ENCODE measurements at regions of chr17 and their contacts with region 1.

Region 1: DNA sequence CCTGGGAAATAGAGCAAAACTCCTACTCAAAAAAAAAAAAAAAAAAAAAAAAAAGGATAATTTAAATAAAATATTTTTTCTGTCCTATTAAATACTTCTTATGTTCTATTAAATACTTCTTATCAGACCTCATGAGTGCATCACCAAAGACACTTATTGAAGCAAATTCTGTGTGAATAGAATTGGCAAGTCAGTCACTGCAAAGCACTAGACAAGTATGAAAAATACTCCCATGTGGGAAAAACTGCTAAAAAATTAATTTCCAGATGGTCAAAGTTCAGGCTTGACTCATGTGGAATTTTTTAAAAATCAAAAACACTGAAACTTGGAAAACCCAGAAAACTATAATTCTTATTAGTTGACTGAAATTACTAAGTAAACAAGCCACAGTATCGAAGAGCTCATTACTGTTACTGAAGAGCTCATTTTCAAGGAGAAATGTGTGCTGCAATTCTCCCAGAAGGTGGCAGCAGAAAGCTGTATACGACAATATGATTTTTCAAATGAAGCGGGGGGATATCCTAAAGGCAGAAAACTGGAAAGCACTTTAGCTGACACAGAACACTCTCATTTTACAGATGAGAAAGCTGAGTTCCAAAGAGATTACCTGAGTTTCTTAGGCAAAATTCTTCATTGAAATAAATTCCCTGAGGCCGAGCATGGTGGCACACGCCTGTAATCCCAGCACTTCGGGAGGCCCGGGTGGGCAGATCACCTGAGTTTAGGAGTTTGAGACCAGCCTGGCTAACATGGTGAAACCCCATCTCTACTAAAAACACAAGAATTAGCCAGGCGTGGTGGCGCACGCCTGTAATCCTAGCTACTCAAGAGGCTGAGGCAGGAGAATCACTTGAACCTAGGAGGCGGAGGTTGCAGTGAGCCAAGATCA is 15.9 kb upstream of the FBXO47 start:
- DNase-seq: no peak
- H3K4me3 ChIP-seq: no peak overlapping the region
- H3K27ac ChIP-seq: peak overlapping the region in 1 of 4 donors; percentile 38
- H3K4me1 ChIP-seq: peaks cover 3 to 11% (median 4%) of the 10 kb centered on the region in 4 donors
- H3K27me3 ChIP-seq: no peaks in the 10 kb centered on the region
- CTCF ChIP-seq: peak; percentile 77 to 85 (median 84)
- EP300 ChIP-seq: no peak
- POLR2A ChIP-seq: no peak

Region 2: GRCh38 chr17:39069114-39069756 is 86.1 kb after region 1 on chr17:
- intact Hi-C with region 1: loop called (anchors 5 kb)
- DNase-seq: no peak
- H3K4me3 ChIP-seq: no peak overlapping the region
- H3K27ac ChIP-seq: no peak overlapping the region
- H3K4me1 ChIP-seq: peaks cover 0 to 12% (median 4%) of the 10 kb centered on the region in 4 donors
- H3K27me3 ChIP-seq: no peaks in the 10 kb centered on the region
- CTCF ChIP-seq: peak; percentile 50 to 66 (median 62)
- EP300 ChIP-seq: no peak
- POLR2A ChIP-seq: no peak

Region 3: GRCh38 chr17:39099663-39100286 is 116.7 kb after region 1 on chr17:
- intact Hi-C with region 1: no loop called
- DNase-seq: peak; percentile 94
- H3K4me3 ChIP-seq: no peak overlapping the region
- H3K27ac ChIP-seq: peak overlapping the region; percentile 21 to 68 (median 50)
- H3K4me1 ChIP-seq: peaks cover 23 to 53% (median 42%) of the 10 kb centered on the region in 4 donors
- H3K27me3 ChIP-seq: no peaks in the 10 kb centered on the region
- CTCF ChIP-seq: no peak
- EP300 ChIP-seq: no peak
- POLR2A ChIP-seq: no peak

Region 4: DNA sequence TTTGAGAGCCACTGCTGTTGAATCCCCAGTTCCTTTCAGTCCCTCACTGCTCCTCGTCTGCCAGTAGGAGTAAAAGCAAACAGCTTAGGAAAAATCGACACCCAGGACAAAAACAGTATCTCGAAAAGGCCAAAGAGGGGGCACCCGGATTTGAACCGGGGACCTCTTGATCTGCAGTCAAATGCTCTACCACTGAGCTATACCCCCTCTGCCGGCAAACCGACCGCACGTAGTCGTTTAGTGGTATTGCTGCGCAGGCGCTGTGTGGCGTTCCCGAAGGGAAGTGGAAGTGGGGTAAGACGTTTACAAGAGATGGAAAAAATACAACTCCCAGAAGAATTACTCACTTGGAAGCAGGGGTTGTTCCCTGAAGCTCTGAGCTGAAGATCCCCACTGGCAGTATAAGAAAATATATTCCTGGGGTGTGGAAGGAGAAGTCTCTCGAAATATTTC is 170.5 kb after region 1 on chr17:
- intact Hi-C with region 1: loop called (anchors 2 kb)
- DNase-seq: peak; percentile 99
- H3K4me3 ChIP-seq: peak overlapping the region; percentile 68 to 87 (median 80)
- H3K27ac ChIP-seq: peak overlapping the region; percentile 87 to 95 (median 94)
- H3K4me1 ChIP-seq: peaks cover 21 to 43% (median 34%) of the 10 kb centered on the region in 4 donors
- H3K27me3 ChIP-seq: peaks cover 0 to 20% (median 6%) of the 10 kb centered on the region in 4 donors
- CTCF ChIP-seq: peak in 2 of 3 experiments; percentile 11 to 15
- EP300 ChIP-seq: no peak
- POLR2A ChIP-seq: no peak

Region 5: GRCh38 chr17:39174907-39175694 is 192.0 kb after region 1 on chr17:
- intact Hi-C with region 1: loop called (anchors 5 kb)
- DNase-seq: no peak
- H3K4me3 ChIP-seq: no peak overlapping the region
- H3K27ac ChIP-seq: no peak overlapping the region
- H3K4me1 ChIP-seq: peaks cover 0 to 16% (median 9%) of the 10 kb centered on the region in 4 donors
- H3K27me3 ChIP-seq: peaks cover 0 to 8% (median 0%) of the 10 kb centered on the region in 4 donors
- CTCF ChIP-seq: peak; percentile 73 to 86 (median 76)
- EP300 ChIP-seq: no peak
- POLR2A ChIP-seq: no peak